ENCODE measurements at regions of chr6 and their contacts with region 1.

Region 1: DNA sequence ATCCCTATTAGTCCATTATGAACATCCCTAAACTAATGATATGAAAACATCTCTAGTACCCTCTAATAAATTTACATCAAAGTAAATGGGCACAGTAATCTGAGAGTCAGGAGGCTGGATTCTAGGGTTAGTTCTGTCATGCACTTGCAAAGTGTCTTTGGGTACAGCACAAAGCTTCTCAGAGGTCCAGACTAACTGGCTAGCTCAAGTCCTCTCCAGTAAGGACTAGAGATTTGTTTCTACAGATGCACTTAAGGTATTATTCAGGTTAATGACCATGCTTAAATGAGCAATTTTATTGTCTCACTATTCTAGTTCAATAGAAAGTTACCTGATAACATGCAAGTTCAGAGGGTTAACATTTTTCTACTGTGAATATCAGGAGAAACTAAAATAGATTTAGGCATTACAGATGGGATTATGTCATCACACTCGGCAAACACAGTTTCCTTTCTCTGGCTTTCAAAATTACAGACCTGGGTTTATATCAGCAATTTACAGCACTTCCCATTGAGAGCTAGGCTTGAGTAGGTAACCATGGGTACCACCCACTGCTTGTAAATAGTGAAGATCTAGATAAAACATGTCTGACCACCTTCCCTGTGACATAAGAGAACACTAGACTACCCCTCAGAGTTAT is 402.9 kb upstream of the RUNX2 start:
- DNase-seq: peak; percentile 18
- H3K4me3 Mint-ChIP-seq: peak overlapping the region; percentile 16
- H3K27ac Mint-ChIP-seq: peak overlapping the region; percentile 67
- H3K4me1 Mint-ChIP-seq: peaks cover 47% of the 10 kb centered on the region
- H3K27me3 Mint-ChIP-seq: no peaks in the 10 kb centered on the region

Region 2: DNA sequence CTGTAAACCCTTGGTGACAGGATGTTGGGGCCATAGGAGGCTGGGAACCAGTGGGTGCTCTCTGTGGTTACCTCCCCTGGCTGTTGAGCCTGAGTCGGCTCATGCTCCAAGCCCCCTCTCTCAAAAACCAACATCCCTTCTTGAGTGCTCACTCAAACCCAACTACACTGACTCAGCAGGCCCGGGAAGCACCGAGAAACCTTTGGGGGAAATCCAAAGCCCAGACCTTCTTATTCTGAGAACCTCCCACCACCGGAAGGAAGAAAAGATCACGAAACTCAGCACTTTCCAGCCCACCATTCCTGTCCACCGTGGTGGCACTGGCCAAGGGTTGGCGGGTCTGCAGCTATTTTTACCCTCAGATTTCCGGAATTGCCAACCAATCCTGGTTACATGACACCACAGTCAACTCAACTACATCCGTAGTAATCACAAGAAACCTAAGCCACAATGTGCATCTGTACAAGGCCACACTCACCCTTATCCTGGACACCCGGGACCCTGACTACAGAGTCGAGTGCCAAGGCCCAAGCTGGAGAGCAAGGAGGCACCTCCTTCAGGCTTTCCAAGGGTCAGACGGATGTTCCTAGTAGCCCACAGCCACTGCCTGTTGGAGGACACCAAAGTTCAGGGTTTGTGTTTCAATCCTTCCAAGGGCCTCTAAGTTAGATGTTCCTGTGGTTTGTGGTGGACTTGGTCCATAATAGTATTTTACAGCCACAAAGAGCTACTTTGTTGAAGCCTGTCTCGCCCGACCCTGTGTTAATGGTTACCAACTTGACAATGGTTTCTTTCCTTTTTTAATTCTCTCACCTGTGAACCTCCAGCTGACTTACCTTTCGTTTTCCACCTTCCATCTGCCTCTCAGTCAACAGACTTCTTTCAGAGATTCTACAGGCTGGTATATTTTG is 220.7 kb before region 1 on chr6:
- intact Hi-C with region 1: loop called (anchors 5 kb)
- DNase-seq: peak; percentile 14
- H3K4me3 Mint-ChIP-seq: peak overlapping the region; percentile 13
- H3K27ac Mint-ChIP-seq: peak overlapping the region; percentile 69
- H3K4me1 Mint-ChIP-seq: peaks cover 27% of the 10 kb centered on the region
- H3K27me3 Mint-ChIP-seq: no peaks in the 10 kb centered on the region

Region 3: DNA sequence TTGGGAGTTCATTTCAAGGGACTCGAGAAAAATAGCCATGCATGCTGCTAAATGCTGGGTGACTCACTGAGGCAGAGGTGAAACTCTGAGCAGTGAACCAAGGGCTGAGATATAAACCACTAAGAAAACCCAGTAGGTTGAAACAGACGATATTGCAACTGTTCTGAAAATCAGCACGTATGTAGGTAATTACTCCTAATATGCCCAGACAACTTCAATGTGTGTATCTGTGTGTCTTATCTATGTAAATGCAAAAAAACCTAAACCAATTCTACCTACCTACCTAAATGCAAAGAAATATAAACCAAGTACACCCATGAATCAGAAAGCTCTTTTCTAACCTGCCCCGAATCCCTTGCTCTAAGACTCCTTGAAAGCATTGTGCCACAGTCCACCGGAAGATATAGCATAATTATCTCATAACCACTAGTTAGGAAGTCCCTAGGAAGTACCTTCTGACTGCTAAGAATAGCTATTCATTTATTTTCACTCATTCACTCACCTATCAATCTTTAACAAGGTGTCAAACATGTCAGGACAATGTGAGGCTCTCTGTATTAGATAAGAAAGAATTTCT is 55.8 kb before region 1 on chr6:
- intact Hi-C with region 1: no loop called
- DNase-seq: no peak
- H3K4me3 Mint-ChIP-seq: no peak overlapping the region
- H3K27ac Mint-ChIP-seq: peak overlapping the region; percentile 45
- H3K4me1 Mint-ChIP-seq: peaks cover 16% of the 10 kb centered on the region
- H3K27me3 Mint-ChIP-seq: no peaks in the 10 kb centered on the region

Region 4: GRCh38 chr6:45310118-45310788 is 385.0 kb after region 1 on chr6:
- intact Hi-C with region 1: loop called (anchors 5 kb)
- DNase-seq: peak; percentile 19
- H3K4me3 Mint-ChIP-seq: peak overlapping the region; percentile 45
- H3K27ac Mint-ChIP-seq: peak overlapping the region; percentile 60
- H3K4me1 Mint-ChIP-seq: peaks cover 42% of the 10 kb centered on the region
- H3K27me3 Mint-ChIP-seq: no peaks in the 10 kb centered on the region